ENCODE measurements at regions of chr22 and their contacts with region 1.

Region 1: DNA sequence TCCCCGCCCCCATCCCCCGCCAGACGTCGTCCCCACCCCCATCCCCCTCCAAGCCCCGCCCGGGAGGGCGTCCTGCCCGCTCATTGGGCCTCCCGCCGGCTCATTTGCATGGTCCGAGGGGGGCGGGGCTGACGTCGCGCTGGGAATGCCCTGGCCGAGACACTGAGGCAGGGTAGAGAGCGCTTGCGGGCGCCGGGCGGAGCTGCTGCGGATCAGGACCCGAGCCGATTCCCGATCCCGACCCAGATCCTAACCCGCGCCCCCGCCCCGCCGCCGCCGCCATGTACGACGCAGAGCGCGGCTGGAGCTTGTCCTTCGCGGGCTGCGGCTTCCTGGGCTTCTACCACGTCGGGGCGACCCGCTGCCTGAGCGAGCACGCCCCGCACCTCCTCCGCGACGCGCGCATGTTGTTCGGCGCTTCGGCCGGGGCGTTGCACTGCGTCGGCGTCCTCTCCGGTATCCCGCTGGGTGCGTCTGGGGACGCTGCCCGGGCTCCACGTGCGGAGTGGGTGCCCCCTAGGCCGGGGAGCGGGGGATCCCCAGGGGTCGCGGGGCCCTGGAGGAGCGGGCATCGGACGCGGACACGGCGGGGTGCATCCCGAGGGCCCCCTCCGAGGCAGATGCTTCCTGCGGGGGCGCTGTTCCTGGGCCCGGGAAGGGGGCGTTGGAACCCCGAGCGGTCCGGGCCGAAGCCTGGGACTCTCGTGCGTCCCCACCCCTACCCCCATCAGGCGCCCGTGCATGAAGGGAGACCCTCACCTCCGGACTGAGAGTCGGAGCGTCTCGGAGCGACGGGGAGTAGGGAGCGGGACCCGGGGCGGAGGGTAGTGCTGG is at the start of gene PNPLA3:
- DNase-seq: peak; percentile 88
- H3K4me3 ChIP-seq: peak within 1 kb of the TSS; percentile 55 to 74 (median 63)
- H3K27ac ChIP-seq: peak within 1 kb of the TSS; percentile 27
- H3K4me1 ChIP-seq: peaks cover 30% of the 10 kb centered on the region
- H3K27me3 ChIP-seq: no peaks in the 10 kb centered on the region
- CTCF ChIP-seq: peak; percentile 29 to 36
- POLR2A ChIP-seq: peak; percentile 47
- total RNA-seq, gene PNPLA3: 12.1 and 12.3 TPM in 2 replicates

Region 2: DNA sequence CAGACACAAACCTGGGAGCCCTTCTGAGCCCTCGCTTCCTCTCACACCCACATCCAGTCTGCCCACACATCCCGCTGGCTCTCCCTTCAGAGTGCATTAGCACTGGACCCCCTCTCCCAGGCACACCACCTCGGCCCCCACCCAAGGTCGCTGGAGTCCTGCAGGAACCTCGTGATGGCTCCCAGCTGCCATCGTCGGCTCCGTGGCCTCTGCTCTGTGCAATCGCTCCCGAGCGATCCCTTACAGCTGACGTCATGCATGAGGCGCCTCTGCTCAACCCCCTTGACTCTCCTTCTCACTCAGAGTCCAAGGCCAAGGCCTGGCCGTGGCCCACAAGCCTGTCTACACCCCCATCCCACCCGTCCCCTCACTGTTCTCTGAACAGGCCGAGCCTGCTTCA is 295.6 kb before region 1 on chr22:
- CTCF ChIA-PET with region 1: no interaction called
- POLR2A ChIA-PET with region 1: no interaction called
- dilution Hi-C with region 1: no loop called
- intact Hi-C with region 1: no loop called
- DNase-seq: no peak
- H3K4me3 ChIP-seq: no peak overlapping the region
- H3K27ac ChIP-seq: no peak overlapping the region
- H3K4me1 ChIP-seq: no peaks in the 10 kb centered on the region
- H3K27me3 ChIP-seq: no peaks in the 10 kb centered on the region
- CTCF ChIP-seq: no peak
- POLR2A ChIP-seq: no peak

Region 3: GRCh38 chr22:43945632-43946383 is 22.0 kb after region 1 on chr22:
- CTCF ChIA-PET with region 1: interaction called, 21 read pairs
- POLR2A ChIA-PET with region 1: no interaction called
- dilution Hi-C with region 1: no loop called
- intact Hi-C with region 1: no loop called
- DNase-seq: peak; percentile 63
- H3K4me3 ChIP-seq: no peak overlapping the region
- H3K27ac ChIP-seq: no peak overlapping the region
- H3K4me1 ChIP-seq: no peaks in the 10 kb centered on the region
- H3K27me3 ChIP-seq: no peaks in the 10 kb centered on the region
- CTCF ChIP-seq: peak; percentile 91 to 97
- POLR2A ChIP-seq: no peak

Region 4: DNA sequence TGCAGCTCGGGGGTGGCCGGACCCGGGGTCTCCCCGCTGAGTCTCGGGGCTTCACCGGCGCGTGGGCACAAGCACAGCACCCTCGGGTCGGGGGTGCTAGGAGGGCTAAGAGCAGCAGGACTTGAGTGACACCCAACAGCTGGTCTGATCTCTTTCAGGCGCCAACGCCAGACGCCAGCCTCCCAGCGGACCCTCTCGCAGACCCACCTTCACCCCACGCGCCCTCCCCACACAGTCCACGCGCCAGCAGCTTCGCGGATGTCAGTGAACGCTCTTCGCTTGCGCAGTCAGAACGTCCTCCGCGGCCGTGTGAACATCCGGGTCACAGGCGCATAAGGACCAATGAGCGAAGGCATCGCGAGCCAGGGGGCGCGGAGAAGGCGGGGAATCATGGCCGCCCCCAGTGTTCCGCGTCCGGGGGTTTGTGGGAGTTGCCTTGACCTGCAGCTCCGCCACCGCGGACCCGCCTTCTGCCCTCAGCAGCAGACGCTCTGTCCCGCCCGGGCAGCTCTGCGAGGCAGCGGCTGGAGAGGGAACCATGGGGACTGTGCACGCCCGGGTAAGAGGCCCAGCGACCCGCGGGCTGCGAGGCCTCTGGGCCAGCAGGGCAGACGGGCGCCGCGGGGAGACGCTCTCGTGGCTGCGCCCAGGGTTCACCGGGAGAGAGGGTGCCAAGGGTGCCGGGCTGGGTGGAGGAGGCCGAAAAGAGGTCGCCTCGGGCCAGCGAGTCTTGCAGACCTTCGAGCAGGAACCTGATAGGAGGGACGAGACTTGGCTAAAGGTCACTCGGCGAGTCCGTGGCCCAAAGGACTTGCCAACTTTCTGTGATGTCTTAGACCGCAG is 31.4 kb after region 1 on chr22 and contains the start of gene SAMM50:
- CTCF ChIA-PET with region 1: no interaction called
- POLR2A ChIA-PET with region 1: no interaction called
- dilution Hi-C with region 1: no loop called
- intact Hi-C with region 1: loop called (anchors 2 kb)
- DNase-seq: peak; percentile 95
- H3K4me3 ChIP-seq: peak within 1 kb of the TSS; percentile 76 to 96 (median 87)
- H3K27ac ChIP-seq: peak within 1 kb of the TSS; percentile 44
- H3K4me1 ChIP-seq: peaks cover 24% of the 10 kb centered on the region
- H3K27me3 ChIP-seq: no peaks in the 10 kb centered on the region
- CTCF ChIP-seq: no peak
- POLR2A ChIP-seq: peak; percentile 63
- total RNA-seq, gene SAMM50: 55.9 and 56.2 TPM in 2 replicates

Measured in endothelial cell of umbilical vein (primary cell).